Ascending aorta (tissue), 2 donors: ENCODE measurements at regions of chr18 and their contacts with region 1.

Region 1: DNA sequence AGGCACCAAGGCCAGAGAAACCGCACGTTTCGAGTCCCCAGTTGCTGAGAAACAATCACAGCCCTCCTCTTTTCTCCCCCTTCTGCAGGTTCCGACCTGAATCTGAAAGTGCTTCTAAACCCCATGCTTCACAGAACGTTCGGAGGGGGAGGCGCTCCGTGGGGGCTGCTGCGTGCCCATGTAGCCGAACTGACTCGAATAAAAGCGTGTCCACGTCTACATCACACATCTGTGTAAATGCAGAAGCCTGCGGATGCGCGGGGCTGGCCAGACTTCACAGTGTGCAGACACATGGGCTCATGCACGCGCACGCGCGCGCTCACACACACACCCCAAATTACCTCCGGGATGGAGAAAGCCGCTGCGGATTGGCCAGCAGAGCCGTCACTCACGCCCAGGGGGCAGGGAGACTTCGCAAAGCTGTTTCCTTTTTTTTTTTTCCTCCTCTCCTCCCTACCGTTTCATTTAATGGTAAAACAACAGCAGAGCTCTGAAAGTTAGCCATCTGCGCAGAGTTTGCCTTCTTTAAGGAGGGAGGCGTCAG is 2.3 kb downstream of the ZNF516 start:
- DNase-seq: peak; percentile 95 to 99
- H3K4me3 ChIP-seq: peak overlapping the region; percentile 67 to 78
- H3K27ac ChIP-seq: peak overlapping the region; percentile 67 to 72
- H3K4me1 ChIP-seq: peaks cover 6 to 7% of the 10 kb centered on the region in 2 donors
- H3K27me3 ChIP-seq: no peaks in the 10 kb centered on the region
- CTCF ChIP-seq: no peak

Region 2: DNA sequence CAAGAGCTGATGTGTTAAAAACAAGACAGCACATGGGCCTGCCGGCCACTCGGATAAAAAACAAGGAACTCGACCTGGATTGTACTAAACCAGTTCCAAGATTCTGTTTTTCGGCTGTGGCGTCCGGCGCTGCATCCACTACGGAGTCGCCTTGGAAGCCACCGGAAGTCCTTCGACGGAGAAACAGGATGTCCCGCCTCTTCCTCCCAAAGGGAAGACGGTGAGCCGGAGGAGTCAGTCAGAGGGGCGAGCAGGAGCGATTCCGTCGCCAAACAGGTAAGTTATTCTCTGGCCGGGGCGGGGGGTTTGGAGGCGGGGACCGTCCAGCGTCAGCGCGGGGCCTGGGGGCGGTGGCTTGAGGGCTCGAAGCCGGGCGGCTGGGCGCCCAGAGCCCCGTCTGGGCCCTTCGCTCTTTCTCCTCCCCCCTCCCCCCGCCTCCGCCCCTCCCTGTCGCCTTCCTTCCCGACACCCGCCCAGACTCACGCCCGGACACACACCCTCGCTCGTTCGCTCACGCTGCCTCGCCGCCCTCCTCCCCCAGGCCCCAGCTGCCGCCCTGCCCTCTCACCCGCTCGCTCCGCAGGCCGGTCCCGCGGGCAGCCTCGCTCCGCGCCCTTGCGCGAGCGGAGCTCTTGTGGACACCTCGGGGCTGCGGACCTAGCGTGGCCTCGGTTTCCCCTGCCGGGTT is 1894.9 kb before region 1 on chr18 and contains the start of gene ZNF407:
- intact Hi-C with region 1: loop called (anchors 10 kb)
- DNase-seq: peak; percentile 34 to 89
- H3K4me3 ChIP-seq: peak within 1 kb of the TSS; percentile 84 to 89
- H3K27ac ChIP-seq: peak within 1 kb of the TSS; percentile 99
- H3K4me1 ChIP-seq: peaks cover 0 to 17% of the 10 kb centered on the region in 2 donors
- H3K27me3 ChIP-seq: no peaks in the 10 kb centered on the region
- CTCF ChIP-seq: peak in 1 of 3 experiments; percentile 16
- total RNA-seq, gene ZNF407: 8.7 TPM

Region 3: GRCh38 chr18:76459687-76460350 is 32.9 kb before region 1 on chr18:
- intact Hi-C with region 1: loop called (anchors 1 kb)
- DNase-seq: peak in 1 of 2 donors; percentile 94
- H3K4me3 ChIP-seq: peak overlapping the region; percentile 36 to 51
- H3K27ac ChIP-seq: peak overlapping the region; percentile 78 to 96
- H3K4me1 ChIP-seq: peaks cover 0 to 12% of the 10 kb centered on the region in 2 donors
- H3K27me3 ChIP-seq: no peaks in the 10 kb centered on the region
- CTCF ChIP-seq: no peak

Region 4: DNA sequence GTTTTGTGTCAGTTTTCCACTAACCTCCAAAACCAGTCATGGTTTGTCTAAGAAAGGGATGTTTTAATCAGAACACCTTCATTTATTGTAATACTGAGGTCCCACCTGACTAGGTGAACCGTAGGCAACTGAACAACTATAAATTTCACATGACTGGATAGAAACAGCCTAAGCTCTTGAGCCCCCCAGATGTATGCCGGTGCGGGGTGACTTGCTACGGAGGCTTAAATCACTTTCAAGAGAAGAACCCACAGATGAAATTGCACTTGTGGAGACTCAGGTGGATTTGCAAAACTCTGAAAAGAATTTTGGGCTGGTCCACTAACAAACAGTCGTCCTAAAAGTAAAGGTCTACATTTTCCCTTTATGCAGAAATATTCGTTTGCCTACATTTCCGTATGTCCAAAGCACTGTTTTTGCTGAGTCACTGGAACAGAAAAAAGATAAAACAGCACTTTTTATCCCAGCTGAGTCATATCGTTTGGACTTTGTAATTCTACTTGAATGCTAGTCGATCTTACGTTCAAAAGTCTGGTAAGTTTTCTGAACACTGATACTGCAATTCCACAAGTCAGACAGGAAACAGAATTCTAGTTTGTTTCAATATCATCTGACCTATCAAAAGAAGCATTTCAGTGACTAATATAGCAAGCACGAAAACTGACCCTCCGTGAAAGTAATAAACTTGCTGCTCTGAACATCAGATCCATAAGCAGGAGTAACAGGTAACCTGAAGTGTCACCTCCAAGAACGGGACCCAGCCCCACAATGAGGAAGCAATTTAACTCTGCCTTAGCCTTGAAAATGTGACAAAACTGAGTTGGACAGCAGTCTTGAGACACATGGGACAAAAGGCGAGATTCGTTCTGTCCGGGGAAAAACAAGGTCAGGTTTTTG is 15.8 kb before region 1 on chr18:
- intact Hi-C with region 1: loop called (anchors 2 kb)
- DNase-seq: no peak
- H3K4me3 ChIP-seq: peak overlapping the region; percentile 28 to 48
- H3K27ac ChIP-seq: peak overlapping the region; percentile 42 to 63
- H3K4me1 ChIP-seq: peaks cover 0 to 9% of the 10 kb centered on the region in 2 donors
- H3K27me3 ChIP-seq: no peaks in the 10 kb centered on the region
- CTCF ChIP-seq: no peak

Region 5: GRCh38 chr18:76565238-76566180 is 72.8 kb after region 1 on chr18:
- intact Hi-C with region 1: loop called (anchors 2 kb)
- DNase-seq: peak; percentile 37 to 87
- H3K4me3 ChIP-seq: peak overlapping the region; percentile 50 to 53
- H3K27ac ChIP-seq: peak overlapping the region; percentile 67 to 82
- H3K4me1 ChIP-seq: peaks cover 0 to 7% of the 10 kb centered on the region in 2 donors
- H3K27me3 ChIP-seq: no peaks in the 10 kb centered on the region
- CTCF ChIP-seq: no peak

Region 6: DNA sequence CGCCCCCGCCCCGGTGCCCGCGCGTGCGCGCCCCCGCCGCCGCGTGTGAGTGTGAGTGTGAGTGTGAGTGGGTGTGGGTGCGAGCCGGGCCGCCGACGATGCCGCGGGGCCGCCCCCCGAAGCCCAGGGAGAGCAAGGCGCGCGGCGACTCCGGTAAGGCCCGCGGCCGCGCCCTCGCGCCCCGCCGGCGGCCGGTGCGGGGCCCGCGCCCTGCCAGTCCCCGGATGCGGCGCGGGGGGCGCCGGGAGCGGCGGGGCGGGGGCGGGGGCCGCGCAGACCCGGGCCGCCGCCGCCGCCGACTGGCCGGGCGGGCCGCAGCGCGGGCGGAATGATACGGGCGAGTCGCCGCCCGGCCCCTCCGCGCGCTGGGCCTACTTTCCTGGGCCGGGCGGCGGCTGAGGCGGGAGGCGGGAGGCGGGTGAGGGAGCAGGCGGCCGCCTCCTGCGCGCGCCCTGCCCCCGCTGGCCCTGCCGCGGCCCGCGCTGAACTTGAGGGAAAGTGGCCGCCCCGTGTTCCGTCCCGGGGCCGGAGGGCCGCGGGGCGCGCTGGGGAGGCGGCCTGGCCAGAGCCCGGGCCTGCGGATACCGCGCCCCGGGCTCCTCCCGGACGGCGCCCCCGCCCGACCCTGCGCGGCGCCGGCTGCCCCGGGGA is 329.9 kb after region 1 on chr18 and contains the start of gene ZNF236:
- intact Hi-C with region 1: loop called (anchors 5 kb)
- DNase-seq: peak in 1 of 2 donors; percentile 84
- H3K4me3 ChIP-seq: peak within 1 kb of the TSS; percentile 78 to 93
- H3K27ac ChIP-seq: peak within 1 kb of the TSS; percentile 92 to 96
- H3K4me1 ChIP-seq: peaks cover 0 to 9% of the 10 kb centered on the region in 2 donors
- H3K27me3 ChIP-seq: no peaks in the 10 kb centered on the region
- CTCF ChIP-seq: no peak
- total RNA-seq, gene ZNF236: 9.7 TPM